CD8-positive, alpha-beta T cell (primary cell): ENCODE measurements at regions of chr10 and their contacts with region 1.

Region 1: DNA sequence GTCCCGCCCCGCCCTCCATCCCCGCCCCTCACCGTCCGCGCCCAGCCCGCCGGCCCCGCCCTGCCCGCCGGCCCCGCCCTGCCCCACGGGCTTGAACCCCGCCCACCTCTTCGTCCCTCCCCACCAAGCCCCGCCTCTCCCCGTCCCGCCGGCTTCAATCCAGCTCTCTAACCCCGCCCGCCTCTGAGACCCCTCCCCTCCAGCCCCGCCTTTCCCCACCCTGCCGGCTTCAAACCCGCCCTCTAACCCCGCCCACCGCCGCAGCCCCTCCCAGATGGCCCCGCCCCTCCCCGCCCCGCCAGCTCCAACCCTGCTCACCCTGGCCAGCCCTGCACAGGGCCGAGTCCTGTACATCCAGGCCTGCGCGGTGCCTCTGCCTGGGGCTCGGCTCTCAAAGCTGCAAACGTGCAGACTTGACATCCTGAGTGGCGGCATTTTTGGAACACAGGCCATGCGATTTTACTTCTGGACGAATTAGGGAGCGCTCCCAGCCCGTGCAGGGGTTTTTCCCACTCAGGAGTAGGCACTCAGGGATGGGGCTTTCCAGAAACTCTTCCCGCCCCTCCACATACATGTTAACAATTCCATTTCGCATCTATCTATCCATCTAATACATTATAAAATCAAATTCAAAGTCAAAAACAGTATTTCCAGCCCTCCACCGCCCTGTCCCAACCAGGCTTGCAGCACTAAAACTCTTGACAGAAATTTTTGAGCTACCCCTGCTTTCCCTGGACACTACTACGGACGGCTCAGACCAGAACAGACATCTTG is 475 bp upstream of the NMT2 start:
- DNase-seq: peak; percentile 93 to 98 (median 96)
- ATAC-seq: peak; percentile 87
- H3K4me3 ChIP-seq: peak overlapping the region; percentile 42 to 47
- H3K4me3 Mint-ChIP-seq: peak overlapping the region; percentile 83
- H3K27ac ChIP-seq: peak overlapping the region; percentile 48 to 64
- H3K27ac Mint-ChIP-seq: peak overlapping the region; percentile 93
- H3K4me1 ChIP-seq: peaks cover 40% of the 10 kb centered on the region
- H3K4me1 Mint-ChIP-seq: peaks cover 66% of the 10 kb centered on the region
- H3K27me3 ChIP-seq: no peaks in the 10 kb centered on the region
- H3K27me3 Mint-ChIP-seq: no peaks in the 10 kb centered on the region
- CTCF ChIP-seq: no peak

Region 2: DNA sequence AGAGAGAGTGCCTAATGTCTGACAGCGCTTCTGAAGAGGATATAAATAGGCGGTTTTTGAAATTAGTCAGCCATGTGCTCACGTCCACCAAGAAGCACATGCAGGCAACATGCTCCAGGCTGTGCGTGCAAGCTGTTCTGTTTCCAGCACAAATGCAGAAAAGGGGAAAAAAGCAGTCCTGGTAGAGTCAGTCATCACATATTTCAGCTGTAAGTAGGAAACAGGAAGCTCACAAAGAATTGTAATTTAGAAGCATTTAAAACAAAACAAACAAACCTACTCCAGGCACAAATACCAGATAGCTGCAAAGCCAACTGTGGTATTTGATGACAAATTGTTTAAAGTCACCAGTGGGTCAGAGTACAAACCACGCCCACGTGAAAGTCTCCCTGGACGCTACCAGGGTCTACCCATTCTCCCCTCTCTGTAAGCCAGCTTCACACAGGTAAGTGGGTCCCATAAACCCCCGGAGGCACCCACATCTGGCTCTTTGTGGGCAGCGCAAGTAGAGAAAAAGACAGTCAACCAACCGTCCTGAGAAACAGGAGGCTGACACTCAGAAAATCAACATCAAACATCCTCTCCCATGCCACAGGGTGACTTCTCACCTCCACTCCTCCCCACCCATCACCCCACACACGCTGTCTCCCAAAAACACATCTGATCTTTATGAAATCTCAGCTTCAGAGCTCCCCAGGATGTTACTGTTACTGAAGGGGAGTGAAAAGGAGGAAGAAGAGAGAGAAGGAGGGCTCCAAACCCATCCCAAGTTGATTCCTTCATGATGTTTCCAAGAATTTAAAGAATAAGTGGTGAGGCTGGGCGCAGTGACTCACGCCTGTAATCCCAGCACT is 580.7 kb before region 1 on chr10:
- CTCF ChIA-PET with region 1: no interaction called
- POLR2A ChIA-PET with region 1: no interaction called
- intact Hi-C with region 1: loop called in 1 of 2 experiments (anchors 10 kb)
- DNase-seq: peak in 3 of 9 experiments; percentile 55 to 79 (median 65)
- ATAC-seq: peak; percentile 35
- H3K4me3 ChIP-seq: peak overlapping the region; percentile 32 to 34
- H3K4me3 Mint-ChIP-seq: peak overlapping the region; percentile 78
- H3K27ac ChIP-seq: peak overlapping the region; percentile 71 to 82
- H3K27ac Mint-ChIP-seq: peak overlapping the region; percentile 97
- H3K4me1 ChIP-seq: peaks cover 89% of the 10 kb centered on the region
- H3K4me1 Mint-ChIP-seq: peaks cover 92% of the 10 kb centered on the region
- H3K27me3 ChIP-seq: no peaks in the 10 kb centered on the region
- H3K27me3 Mint-ChIP-seq: no peaks in the 10 kb centered on the region
- CTCF ChIP-seq: no peak

Region 3: GRCh38 chr10:14878266-14879054 is 290.5 kb before region 1 on chr10 and contains the start of gene SUV39H2:
- CTCF ChIA-PET with region 1: no interaction called
- POLR2A ChIA-PET with region 1: interaction called, 3 read pairs
- intact Hi-C with region 1: loop called (anchors 2 to 5 kb)
- DNase-seq: peak; percentile 78 to 96 (median 92)
- ATAC-seq: peak; percentile 80
- H3K4me3 ChIP-seq: peak within 1 kb of the TSS; percentile 92 to 94
- H3K4me3 Mint-ChIP-seq: peak within 1 kb of the TSS; percentile 96
- H3K27ac ChIP-seq: peak within 1 kb of the TSS; percentile 67 to 69
- H3K27ac Mint-ChIP-seq: peak within 1 kb of the TSS; percentile 79
- H3K4me1 ChIP-seq: peaks cover 26% of the 10 kb centered on the region
- H3K4me1 Mint-ChIP-seq: peaks cover 31% of the 10 kb centered on the region
- H3K27me3 ChIP-seq: no peaks in the 10 kb centered on the region
- H3K27me3 Mint-ChIP-seq: no peaks in the 10 kb centered on the region
- CTCF ChIP-seq: no peak
- total RNA-seq, gene SUV39H2: 2.6 to 3.1 TPM

Region 4: GRCh38 chr10:15088428-15089261 is 80.3 kb before region 1 on chr10 and contains the start of gene ACBD7:
- CTCF ChIA-PET with region 1: no interaction called
- POLR2A ChIA-PET with region 1: no interaction called
- intact Hi-C with region 1: loop called in 1 of 2 experiments (anchors 2 kb)
- DNase-seq: peak; percentile 54 to 88 (median 76)
- ATAC-seq: peak; percentile 98
- H3K4me3 ChIP-seq: peak within 1 kb of the TSS; percentile 53 to 56
- H3K4me3 Mint-ChIP-seq: peak within 1 kb of the TSS; percentile 82
- H3K27ac ChIP-seq: no peak within 1 kb of the TSS
- H3K27ac Mint-ChIP-seq: no peak within 1 kb of the TSS
- H3K4me1 ChIP-seq: no peaks in the 10 kb centered on the region
- H3K4me1 Mint-ChIP-seq: peaks cover 4% of the 10 kb centered on the region
- H3K27me3 ChIP-seq: no peaks in the 10 kb centered on the region
- H3K27me3 Mint-ChIP-seq: no peaks in the 10 kb centered on the region
- CTCF ChIP-seq: peak; percentile 48
- total RNA-seq, gene ACBD7: 0.86 to 1.8 TPM

Region 5: DNA sequence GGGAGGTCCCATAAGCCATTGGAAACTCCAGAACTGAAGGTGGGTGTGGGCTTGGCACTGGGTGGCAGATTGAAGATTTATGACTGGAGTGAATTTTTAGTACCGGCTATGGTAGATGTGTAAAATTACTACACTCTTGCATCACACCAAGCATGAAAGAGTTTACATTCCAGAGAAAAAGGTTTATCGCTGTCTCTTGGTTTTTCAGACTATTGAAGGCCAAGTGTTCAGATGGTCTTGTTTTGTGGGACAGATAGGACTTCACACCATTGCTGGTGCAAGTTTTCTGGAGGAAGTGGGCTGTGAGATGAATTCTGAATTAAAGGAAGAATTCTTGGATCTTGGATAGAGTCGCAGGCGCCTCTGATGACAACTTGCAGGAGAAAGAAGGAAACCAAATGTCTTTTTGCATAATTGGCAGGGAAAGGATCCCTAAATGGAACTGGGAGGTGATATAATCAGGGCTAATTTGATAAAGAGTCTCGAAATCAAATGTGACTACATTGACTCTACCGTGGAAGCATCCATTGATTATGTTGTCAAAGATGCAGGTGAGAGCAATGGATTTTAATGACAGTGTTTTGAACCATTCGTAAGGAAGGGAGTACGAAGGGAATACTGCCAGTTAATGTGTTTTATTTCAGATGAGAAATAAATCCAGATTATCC is 13.7 kb after region 1 on chr10:
- CTCF ChIA-PET with region 1: interaction called, 11 read pairs
- POLR2A ChIA-PET with region 1: interaction called, 29 read pairs
- intact Hi-C with region 1: loop called in 1 of 2 experiments (anchors 2 kb)
- DNase-seq: no peak
- ATAC-seq: no peak
- H3K4me3 ChIP-seq: no peak overlapping the region
- H3K4me3 Mint-ChIP-seq: no peak overlapping the region
- H3K27ac ChIP-seq: no peak overlapping the region
- H3K27ac Mint-ChIP-seq: no peak overlapping the region
- H3K4me1 ChIP-seq: peaks cover 22% of the 10 kb centered on the region
- H3K4me1 Mint-ChIP-seq: peaks cover 31% of the 10 kb centered on the region
- H3K27me3 ChIP-seq: no peaks in the 10 kb centered on the region
- H3K27me3 Mint-ChIP-seq: no peaks in the 10 kb centered on the region
- CTCF ChIP-seq: no peak

Region 6: DNA sequence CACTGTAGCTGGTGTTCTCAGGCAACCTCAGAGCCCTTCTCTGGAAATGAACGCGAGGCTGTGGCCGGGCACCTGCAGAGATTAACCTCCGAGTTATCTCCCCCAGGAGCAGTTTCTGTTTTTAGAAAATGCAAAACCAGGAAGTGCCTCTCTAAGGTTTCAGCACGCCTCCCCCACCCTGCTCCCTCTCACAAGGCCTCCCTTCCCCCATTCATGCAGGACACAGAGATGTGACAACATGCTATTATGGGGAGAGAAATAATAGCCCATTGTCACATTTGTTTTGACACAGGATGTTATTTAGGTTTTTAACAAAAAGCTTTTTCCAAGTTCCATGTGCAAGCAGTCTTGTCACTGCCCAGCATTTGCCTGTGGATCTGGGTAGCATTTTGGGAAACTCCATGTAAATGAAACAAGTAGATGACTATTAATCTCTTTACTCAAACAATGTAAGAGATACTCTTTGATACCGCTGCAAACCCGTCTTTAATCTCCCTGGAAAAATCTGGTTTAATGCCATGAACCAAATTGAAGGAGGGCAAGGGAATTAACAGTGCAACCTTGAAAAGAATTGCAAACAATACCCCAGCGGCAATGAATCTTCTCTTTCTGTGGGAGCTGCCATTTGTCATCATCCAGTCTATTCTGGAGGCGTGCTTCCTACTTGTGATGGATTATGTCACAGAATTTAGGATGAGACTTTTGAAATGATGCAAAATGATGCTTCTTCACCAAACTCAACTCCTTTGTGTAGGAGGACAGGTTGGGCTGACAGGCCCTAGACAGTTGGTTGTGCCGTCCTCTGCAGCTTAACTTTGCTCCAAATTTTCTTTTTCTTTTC is 86.1 kb after region 1 on chr10:
- CTCF ChIA-PET with region 1: interaction called, 4 read pairs
- POLR2A ChIA-PET with region 1: interaction called, 3 read pairs
- intact Hi-C with region 1: loop called in 1 of 2 experiments (anchors 2 kb)
- DNase-seq: peak in 7 of 9 experiments; percentile 2 to 57 (median 22)
- ATAC-seq: peak; percentile 34
- H3K4me3 ChIP-seq: peak overlapping the region; percentile 50 to 73
- H3K4me3 Mint-ChIP-seq: peak overlapping the region; percentile 98
- H3K27ac ChIP-seq: peak overlapping the region; percentile 13 to 20
- H3K27ac Mint-ChIP-seq: peak overlapping the region; percentile 93
- H3K4me1 ChIP-seq: peaks cover 18% of the 10 kb centered on the region
- H3K4me1 Mint-ChIP-seq: peaks cover 43% of the 10 kb centered on the region
- H3K27me3 ChIP-seq: no peaks in the 10 kb centered on the region
- H3K27me3 Mint-ChIP-seq: no peaks in the 10 kb centered on the region
- CTCF ChIP-seq: no peak